A549 (cell line): ENCODE measurements at regions of chr10 and their contacts with region 1.

Region 1: DNA sequence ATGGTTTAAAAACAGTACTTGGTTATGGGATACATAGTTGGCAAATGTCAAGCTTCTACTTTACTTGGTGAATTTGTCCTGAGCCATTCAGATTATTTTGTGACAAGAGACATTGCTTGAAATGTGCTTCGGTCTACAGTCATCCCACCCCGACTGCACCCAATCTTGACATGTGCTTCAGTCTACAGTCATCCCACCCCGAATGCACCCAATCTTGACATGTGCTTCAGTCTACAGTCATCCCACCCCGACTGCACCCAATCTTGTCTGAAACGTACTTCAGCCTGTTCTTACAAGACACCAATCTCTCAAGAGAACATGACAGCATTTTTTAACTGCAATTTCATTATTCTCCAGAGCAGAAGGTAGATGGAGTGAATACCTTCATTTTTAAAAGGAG is 47.8 kb downstream of the PRKCQ start:
- DNase-seq: no peak
- ATAC-seq: no peak
- H3K4me3 ChIP-seq: no peak overlapping the region
- H3K27ac ChIP-seq: no peak overlapping the region
- H3K4me1 ChIP-seq: no peaks in the 10 kb centered on the region
- CTCF ChIP-seq: no peak
- EP300 ChIP-seq: no peak
- POLR2A ChIP-seq: no peak
- RAD21 ChIP-seq: no peak

Region 2: DNA sequence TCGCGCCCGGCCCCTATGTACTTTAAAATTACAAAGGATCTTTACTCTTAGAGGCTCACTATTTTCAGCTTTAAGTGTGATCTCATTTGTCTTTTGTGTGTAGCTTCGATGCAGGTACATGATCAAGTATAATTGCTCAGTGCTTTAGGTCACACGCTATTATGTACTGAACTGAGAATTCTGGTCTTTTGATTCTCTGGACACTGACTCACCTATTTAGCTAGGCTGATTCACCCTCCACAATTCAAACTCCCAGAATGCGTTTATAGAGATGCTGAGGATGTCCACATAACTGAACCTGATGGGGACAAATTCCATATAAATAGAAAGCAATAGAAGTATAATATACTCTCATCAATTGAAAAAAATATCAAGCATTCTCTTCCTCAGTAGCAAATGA is 10.1 kb before region 1 on chr10:
- CTCF ChIA-PET with region 1: interaction called, 13 read pairs
- POLR2A ChIA-PET with region 1: no interaction called
- DNase-seq: peak; percentile 4 to 19
- ATAC-seq: peak; percentile 35 to 59; a peak in 1 of 6 replicates
- H3K4me3 ChIP-seq: no peak overlapping the region
- H3K27ac ChIP-seq: no peak overlapping the region
- H3K4me1 ChIP-seq: no peaks in the 10 kb centered on the region
- CTCF ChIP-seq: no peak
- EP300 ChIP-seq: no peak
- POLR2A ChIP-seq: no peak
- RAD21 ChIP-seq: no peak